Right lobe of liver (tissue), 6 donors: ENCODE measurements at regions of chr10 and their contacts with region 1.

Region 1: DNA sequence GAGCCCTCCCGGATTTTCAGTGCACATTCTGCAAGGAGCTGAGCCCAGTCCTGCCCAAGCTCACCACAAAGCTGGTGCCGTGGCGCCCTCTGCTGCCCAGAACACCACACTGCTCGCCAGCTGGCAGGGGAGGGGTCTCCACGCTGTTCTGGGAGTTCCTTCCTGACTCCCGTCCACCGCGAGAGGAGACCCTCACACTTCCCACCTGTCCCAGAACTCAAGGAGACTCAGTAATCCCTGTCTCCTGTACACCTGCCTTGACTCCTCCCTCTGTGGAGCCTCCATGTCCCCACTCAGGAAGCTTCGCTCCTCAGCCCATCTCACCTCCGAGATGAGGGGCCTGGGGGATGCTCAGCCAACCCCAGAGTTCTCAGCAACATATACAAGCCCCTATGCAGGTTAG is 11.3 kb downstream of the C10orf105 start:
- DNase-seq: peak in 2 of 3 donors; percentile 69 to 75
- ATAC-seq: peak; percentile 49 to 71 (median 64)
- H3K4me3 ChIP-seq: no peak overlapping the region
- H3K27ac ChIP-seq: no peak overlapping the region
- H3K4me1 ChIP-seq: peaks cover 0 to 6% (median 0%) of the 10 kb centered on the region in 4 donors
- H3K27me3 ChIP-seq: no peaks in the 10 kb centered on the region
- CTCF ChIP-seq: peak; percentile 73 to 93 (median 82)
- POLR2A ChIP-seq: no peak

Region 2: DNA sequence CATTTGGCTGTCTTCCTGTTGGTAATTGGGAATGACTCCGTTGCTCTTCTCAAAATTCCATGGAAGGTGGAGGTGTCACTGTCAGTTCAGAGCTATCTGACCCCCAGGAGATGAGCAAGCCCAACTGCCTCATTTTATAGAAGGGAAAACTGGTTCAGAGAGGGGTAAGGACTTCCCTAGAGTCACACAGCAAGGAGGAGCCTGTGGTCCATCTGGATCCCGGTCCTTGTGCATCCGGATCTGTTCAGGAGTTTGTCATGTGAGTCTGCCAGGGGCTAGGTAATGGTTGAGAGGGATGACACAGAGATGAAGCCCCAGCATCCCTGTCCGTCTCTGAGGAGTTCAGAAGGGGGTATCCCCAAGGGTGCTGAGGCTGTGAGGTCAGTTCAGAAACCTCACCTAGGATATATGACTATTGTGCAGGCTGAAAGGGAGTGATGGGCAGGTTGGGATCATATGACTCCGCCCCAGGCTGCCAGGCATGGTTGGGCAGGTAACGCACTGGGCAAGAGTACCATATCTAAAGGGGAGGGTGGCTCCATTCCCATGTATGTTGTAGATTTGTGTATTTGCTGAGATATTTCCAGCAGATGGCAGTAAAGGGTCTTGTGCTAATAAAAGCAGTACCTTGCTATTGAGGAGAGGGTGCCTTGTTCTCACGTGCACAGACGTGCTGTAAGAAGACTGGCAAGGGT is 405.3 kb before region 1 on chr10:
- intact Hi-C with region 1: loop called in 1 of 2 experiments (anchors 10 kb)
- DNase-seq: peak in 1 of 3 donors; percentile 26
- ATAC-seq: peak; percentile 36 to 56 (median 38)
- H3K4me3 ChIP-seq: no peak overlapping the region
- H3K27ac ChIP-seq: peak overlapping the region in 1 of 3 donors; percentile 26
- H3K4me1 ChIP-seq: peaks cover 0 to 19% (median 6%) of the 10 kb centered on the region in 4 donors
- H3K27me3 ChIP-seq: no peaks in the 10 kb centered on the region
- CTCF ChIP-seq: peak; percentile 23 to 67 (median 58)
- POLR2A ChIP-seq: no peak

Region 3: GRCh38 chr10:71396084-71396720 is 312.1 kb before region 1 on chr10:
- intact Hi-C with region 1: loop called in 1 of 2 experiments (anchors 10 kb)
- DNase-seq: peak; percentile 58 to 72 (median 71)
- ATAC-seq: peak; percentile 84 to 87 (median 86)
- H3K4me3 ChIP-seq: peak overlapping the region; percentile 37 to 58 (median 47)
- H3K27ac ChIP-seq: no peak overlapping the region
- H3K4me1 ChIP-seq: peaks cover 0 to 12% (median 0%) of the 10 kb centered on the region in 4 donors
- H3K27me3 ChIP-seq: no peaks in the 10 kb centered on the region
- CTCF ChIP-seq: peak; percentile 40 to 65 (median 57)
- POLR2A ChIP-seq: no peak